SK-N-SH (cell line): ENCODE measurements at regions of chrX and their contacts with region 1.

Region 1: GRCh38 chrX:106415276-106415895 is 196.4 kb upstream of the RADX start:
- DNase-seq: peak; percentile 26
- H3K4me3 ChIP-seq: no peak overlapping the region
- H3K27ac ChIP-seq: no peak overlapping the region
- H3K4me1 ChIP-seq: no peaks in the 10 kb centered on the region
- H3K27me3 ChIP-seq: no peaks in the 10 kb centered on the region
- CTCF ChIP-seq: peak; percentile 81
- EP300 ChIP-seq: no peak
- RAD21 ChIP-seq: 0 out of 2 replicates have a peak, but pooled peaks have one; percentile 18

Region 2: DNA sequence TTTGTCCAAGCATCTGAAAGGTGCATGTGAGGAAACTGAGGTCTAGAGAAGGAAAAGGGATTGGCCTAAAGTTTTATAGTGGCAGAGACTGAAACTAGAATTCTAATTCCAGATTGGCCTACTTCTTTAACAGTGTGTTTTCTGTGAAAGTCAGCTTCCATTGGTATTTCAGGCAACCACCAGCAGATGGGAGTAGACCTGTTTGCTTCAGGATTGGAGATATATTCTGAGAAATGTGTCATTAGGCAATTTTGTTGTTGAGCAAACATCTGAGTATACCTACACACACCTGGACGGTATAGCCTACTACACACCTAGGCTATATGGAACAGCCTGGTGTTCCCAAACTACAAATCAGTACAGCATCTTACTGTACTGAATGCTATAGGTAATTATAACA is 10.9 kb before region 1 on chrX:
- CTCF ChIA-PET with region 1: interaction called, 13 read pairs
- POLR2A ChIA-PET with region 1: no interaction called
- DNase-seq: no peak
- H3K4me3 ChIP-seq: no peak overlapping the region
- H3K27ac ChIP-seq: no peak overlapping the region
- H3K4me1 ChIP-seq: no peaks in the 10 kb centered on the region
- H3K27me3 ChIP-seq: peaks cover 6% of the 10 kb centered on the region; the same call in 1 of the 2 replicates
- CTCF ChIP-seq: peak; percentile 41
- EP300 ChIP-seq: no peak
- RAD21 ChIP-seq: no peak